Aorta (tissue), 5 donors: ENCODE measurements at regions of chr1 and their contacts with region 1.

Region 1: GRCh38 chr1:101288491-101288944 is 51.7 kb downstream of the S1PR1 start:
- DNase-seq: peak in 1 of 2 donors; percentile 71
- ATAC-seq: peak; percentile 90
- H3K4me3 ChIP-seq: no peak overlapping the region
- H3K27ac ChIP-seq: no peak overlapping the region
- H3K4me1 ChIP-seq: no peaks in the 10 kb centered on the region
- H3K27me3 ChIP-seq: no peaks in the 10 kb centered on the region

Region 2: GRCh38 chr1:100921109-100921706 is 367.3 kb before region 1 on chr1:
- intact Hi-C with region 1: loop called (anchors 1 to 2 kb)
- DNase-seq: no peak
- ATAC-seq: no peak
- H3K4me3 ChIP-seq: no peak overlapping the region
- H3K27ac ChIP-seq: no peak overlapping the region
- H3K4me1 ChIP-seq: no peaks in the 10 kb centered on the region
- H3K27me3 ChIP-seq: no peaks in the 10 kb centered on the region

Region 3: DNA sequence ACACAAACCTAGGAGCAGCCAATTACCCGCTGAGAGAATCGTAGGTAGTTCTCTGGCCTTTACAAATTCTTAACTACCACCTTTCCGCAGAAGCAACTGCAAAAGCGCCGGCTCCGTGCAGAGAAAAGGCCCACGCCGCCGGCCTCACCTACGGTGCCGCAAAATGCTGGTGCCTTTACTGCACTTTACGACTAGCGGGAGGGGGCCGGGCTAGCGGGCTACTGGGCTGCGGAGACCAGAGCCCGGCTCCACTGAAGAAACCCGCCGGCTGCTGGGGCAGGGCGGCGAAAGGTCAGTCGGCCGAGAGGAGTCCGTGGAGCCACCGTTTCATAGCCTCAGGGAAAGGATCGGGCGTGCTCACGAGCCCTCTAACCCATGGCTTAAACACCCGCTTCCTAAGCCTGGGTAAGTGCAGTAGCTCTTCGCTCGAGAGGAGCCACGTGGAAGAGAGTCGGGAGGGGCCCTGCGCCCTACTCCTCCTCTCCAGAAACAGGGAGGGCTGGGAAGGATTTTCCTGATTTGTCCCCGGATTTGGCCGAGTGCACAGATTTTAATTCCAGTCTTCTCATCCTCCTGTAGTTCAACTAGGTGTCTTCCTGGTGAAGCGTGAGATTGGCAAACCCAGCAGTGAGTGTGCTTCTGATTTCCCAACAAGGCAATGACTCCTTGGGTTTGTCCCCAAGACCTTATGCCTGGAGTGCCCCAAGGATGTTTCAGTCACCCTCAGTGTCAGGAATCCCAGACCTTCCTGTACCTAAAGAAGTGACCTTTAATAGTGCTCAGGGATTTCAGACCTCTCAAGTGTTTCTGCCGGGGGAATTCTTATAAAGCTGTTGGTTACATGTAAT is 262.6 kb before region 1 on chr1 and contains the start of gene DPH5:
- intact Hi-C with region 1: loop called in 1 of 2 experiments (anchors 10 kb)
- DNase-seq: peak; percentile 93 to 97
- ATAC-seq: peak; percentile 99
- H3K4me3 ChIP-seq: peak within 1 kb of the TSS; percentile 46 to 84
- H3K27ac ChIP-seq: peak within 1 kb of the TSS in 1 of 2 donors; percentile 35
- H3K4me1 ChIP-seq: peaks cover 0 to 1% of the 10 kb centered on the region in 2 donors
- H3K27me3 ChIP-seq: no peaks in the 10 kb centered on the region
- total RNA-seq, gene DPH5: 8.6 to 17.0 TPM

Region 4: DNA sequence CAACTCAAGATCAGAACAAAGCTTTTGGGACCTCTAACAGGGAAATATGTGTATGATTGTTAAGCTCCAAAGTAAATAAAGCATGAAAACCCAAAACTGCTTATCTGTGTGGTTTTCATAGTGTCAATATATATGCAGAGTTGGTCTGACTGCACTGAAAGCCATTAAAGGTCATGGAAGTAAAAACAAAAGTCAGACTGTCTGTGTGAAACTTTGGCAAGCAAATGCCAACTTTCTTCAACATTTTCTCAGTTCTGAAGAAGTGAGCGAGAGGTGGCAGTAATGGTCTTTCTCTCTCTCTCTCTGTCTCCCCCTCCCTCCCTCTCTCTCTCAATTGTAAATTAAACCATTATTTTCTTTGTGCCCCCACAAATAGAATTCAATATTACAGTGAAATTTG is 151.8 kb before region 1 on chr1:
- intact Hi-C with region 1: loop called in 1 of 2 experiments (anchors 2 kb)
- DNase-seq: no peak
- ATAC-seq: no peak
- H3K4me3 ChIP-seq: no peak overlapping the region
- H3K27ac ChIP-seq: no peak overlapping the region
- H3K4me1 ChIP-seq: peaks cover 2% of the 10 kb centered on the region in 2 donors
- H3K27me3 ChIP-seq: no peaks in the 10 kb centered on the region